Activated naive CD4-positive, alpha-beta T cell treated with anti-CD3 and anti-CD28 coated beads for 36 hours (primary cell): ENCODE measurements at regions of chr3 and their contacts with region 1.

Region 1: DNA sequence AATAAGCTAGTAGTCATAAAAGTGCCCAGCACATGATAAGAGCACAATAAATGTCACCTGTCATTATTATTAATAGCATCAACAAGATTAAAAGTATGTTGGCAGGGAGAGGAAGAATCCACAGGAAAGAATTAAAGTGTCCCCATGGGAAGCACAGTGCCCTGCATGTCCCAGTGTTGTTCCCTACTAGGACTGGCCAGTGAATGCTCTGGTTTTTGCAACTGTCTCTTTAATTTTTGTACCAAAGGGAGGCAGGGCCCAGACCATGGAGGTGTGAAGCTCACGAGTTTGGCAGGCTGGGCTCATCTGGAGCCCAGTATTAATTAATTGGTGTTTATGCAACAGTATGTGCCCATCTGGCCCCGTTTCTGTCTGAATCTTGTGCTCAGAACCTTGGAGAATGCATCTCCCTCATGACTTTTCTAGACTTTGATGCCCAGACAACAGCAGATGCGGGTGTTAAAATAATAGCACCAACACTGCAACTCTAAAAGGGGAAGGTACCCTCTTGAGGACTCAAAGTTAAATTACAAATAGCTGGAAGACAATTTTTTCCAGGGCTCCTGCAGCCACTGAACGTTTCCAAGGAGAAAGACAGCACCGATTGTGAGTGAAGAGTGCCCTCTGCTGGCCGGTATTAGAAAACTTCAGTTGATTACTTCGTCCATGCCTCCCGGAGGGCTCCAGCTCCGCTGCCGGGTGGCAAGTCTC is 71.9 kb upstream of the SPATA12 start:
- DNase-seq: peak; percentile 82
- H3K4me3 Mint-ChIP-seq: no peak overlapping the region
- H3K27ac Mint-ChIP-seq: no peak overlapping the region
- H3K4me1 Mint-ChIP-seq: peaks cover 16% of the 10 kb centered on the region
- H3K27me3 Mint-ChIP-seq: peaks cover 5% of the 10 kb centered on the region

Region 2: DNA sequence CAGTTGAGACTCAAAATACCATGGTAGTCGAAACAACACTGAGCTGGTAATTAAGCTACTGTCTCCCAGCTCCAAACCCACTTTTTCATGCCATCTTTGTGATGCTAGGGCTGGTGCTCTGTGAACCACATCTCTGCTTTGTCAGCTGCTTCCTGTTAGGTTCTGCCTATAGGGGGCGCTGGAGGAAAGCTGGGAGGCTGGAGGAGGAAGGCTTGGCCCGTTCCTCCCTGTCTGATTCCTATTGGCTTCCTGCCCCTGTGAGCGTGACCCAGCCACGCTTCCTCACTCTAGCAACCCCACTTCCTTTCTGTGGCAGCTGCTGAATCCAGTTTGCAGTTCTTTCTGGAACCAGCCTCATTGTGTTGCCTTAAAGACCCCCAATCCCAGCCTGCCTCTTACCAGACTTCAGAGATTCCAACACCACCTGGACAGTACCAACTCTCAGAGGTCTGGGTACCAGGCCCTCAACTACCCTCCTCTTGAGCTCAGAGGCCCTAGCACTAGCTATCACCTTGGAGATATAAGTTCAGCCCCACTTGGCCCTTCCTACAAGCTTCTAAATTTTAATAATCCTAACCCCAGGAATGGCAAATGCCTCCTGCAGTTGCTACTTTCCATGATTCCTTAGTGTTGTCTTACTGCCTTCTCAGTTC is 641.3 kb before region 1 on chr3:
- CTCF ChIA-PET with region 1: no interaction called
- intact Hi-C with region 1: loop called (anchors 5 kb)
- DNase-seq: peak; percentile 70
- H3K4me3 Mint-ChIP-seq: no peak overlapping the region
- H3K27ac Mint-ChIP-seq: no peak overlapping the region
- H3K4me1 Mint-ChIP-seq: no peaks in the 10 kb centered on the region
- H3K27me3 Mint-ChIP-seq: peaks cover 6% of the 10 kb centered on the region

Region 3: GRCh38 chr3:56693750-56694149 is 294.9 kb before region 1 on chr3:
- CTCF ChIA-PET with region 1: interaction called, 20 read pairs
- intact Hi-C with region 1: no loop called
- DNase-seq: no peak
- H3K4me3 Mint-ChIP-seq: peak overlapping the region; percentile 26
- H3K27ac Mint-ChIP-seq: peak overlapping the region; percentile 19
- H3K4me1 Mint-ChIP-seq: peaks cover 40% of the 10 kb centered on the region
- H3K27me3 Mint-ChIP-seq: no peaks in the 10 kb centered on the region

Region 4: DNA sequence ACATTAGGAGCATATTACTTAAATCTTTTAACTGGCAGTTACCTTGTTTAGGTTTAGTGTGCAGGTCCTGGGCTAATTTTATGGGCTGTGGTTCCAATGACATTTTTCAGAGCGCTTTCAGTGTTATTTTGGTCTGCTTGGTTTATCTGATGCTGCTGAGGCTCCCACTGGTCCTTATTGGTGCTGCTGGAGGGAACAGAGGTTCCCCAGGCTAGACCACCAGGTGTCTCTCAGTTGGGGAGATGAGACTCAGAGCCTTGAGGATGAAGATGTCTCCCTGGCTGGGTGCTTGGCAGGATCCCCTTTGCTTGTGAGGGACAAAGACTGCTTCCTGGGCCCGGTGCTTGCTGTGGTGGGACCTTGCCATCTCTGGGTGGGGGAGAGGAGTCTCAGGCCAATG is 277.3 kb before region 1 on chr3:
- CTCF ChIA-PET with region 1: interaction called, 187 read pairs
- intact Hi-C with region 1: no loop called
- DNase-seq: no peak
- H3K4me3 Mint-ChIP-seq: no peak overlapping the region
- H3K27ac Mint-ChIP-seq: no peak overlapping the region
- H3K4me1 Mint-ChIP-seq: no peaks in the 10 kb centered on the region
- H3K27me3 Mint-ChIP-seq: no peaks in the 10 kb centered on the region

Region 5: GRCh38 chr3:56790016-56790821 is 198.4 kb before region 1 on chr3:
- CTCF ChIA-PET with region 1: interaction called, 23 read pairs
- intact Hi-C with region 1: no loop called
- DNase-seq: peak; percentile 57
- H3K4me3 Mint-ChIP-seq: peak overlapping the region; percentile 19
- H3K27ac Mint-ChIP-seq: peak overlapping the region; percentile 98
- H3K4me1 Mint-ChIP-seq: peaks cover 84% of the 10 kb centered on the region
- H3K27me3 Mint-ChIP-seq: no peaks in the 10 kb centered on the region

Region 6: GRCh38 chr3:56862352-56863074 is 126.1 kb before region 1 on chr3:
- CTCF ChIA-PET with region 1: interaction called, 10 read pairs
- intact Hi-C with region 1: no loop called
- DNase-seq: peak; percentile 46
- H3K4me3 Mint-ChIP-seq: no peak overlapping the region
- H3K27ac Mint-ChIP-seq: peak overlapping the region; percentile 76
- H3K4me1 Mint-ChIP-seq: peaks cover 73% of the 10 kb centered on the region
- H3K27me3 Mint-ChIP-seq: no peaks in the 10 kb centered on the region

Region 7: GRCh38 chr3:57047974-57048671 is 59.5 kb after region 1 on chr3:
- CTCF ChIA-PET with region 1: no interaction called
- intact Hi-C with region 1: no loop called
- DNase-seq: no peak
- H3K4me3 Mint-ChIP-seq: no peak overlapping the region
- H3K27ac Mint-ChIP-seq: no peak overlapping the region
- H3K4me1 Mint-ChIP-seq: no peaks in the 10 kb centered on the region
- H3K27me3 Mint-ChIP-seq: no peaks in the 10 kb centered on the region